ENCODE measurements at regions of chr3 and their contacts with region 1.

Region 1: GRCh38 chr3:4983739-4984510 is 4.7 kb downstream of the BHLHE40 start:
- DNase-seq: peak; percentile 75
- H3K4me3 ChIP-seq: peak overlapping the region; percentile 19
- H3K27me3 ChIP-seq: no peaks in the 10 kb centered on the region
- CTCF ChIP-seq: no peak

Region 2: DNA sequence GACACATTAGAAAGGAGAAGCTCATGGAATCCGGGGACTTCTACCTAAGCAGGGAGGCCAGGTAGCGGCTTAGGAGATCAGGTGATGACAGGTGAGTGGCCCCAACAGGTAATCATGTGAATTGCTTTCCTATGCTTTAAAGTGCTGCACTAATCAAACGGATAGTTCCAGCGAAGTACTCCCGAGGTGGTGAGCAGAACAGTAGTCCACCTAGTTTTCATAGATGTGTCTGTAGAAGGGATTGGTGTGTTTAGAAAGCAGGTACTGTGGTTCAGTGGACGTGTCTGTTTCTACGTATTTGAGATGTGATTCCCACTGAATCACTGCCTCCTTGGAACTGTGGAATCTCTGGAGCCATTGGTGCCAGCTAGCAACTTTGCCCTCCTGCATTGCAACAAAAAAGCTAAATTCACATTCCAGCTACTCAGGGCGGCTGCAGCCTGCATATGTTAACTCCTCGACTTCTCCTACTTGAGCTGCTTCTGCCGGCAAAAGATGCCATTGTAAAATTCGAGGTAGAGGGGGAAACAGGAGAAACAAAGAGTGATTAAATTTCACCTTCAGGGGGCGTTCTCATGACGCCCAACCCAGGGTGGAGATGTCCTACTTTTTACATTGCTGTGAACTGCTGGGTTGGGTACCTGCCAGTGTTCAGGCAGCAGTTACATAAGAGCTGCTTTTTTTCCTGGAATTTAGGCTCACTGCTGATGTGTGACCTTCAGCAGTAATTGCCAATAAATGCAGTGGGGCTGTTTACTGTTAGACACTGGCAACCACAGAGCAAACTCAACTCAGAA is 263.4 kb before region 1 on chr3:
- CTCF ChIA-PET with region 1: interaction called, 26 read pairs
- POLR2A ChIA-PET with region 1: no interaction called
- DNase-seq: no peak
- H3K4me3 ChIP-seq: no peak overlapping the region
- H3K27me3 ChIP-seq: no peaks in the 10 kb centered on the region
- CTCF ChIP-seq: peak; percentile 27